A673 (cell line): ENCODE measurements at regions of chr15 and their contacts with region 1.

Region 1: DNA sequence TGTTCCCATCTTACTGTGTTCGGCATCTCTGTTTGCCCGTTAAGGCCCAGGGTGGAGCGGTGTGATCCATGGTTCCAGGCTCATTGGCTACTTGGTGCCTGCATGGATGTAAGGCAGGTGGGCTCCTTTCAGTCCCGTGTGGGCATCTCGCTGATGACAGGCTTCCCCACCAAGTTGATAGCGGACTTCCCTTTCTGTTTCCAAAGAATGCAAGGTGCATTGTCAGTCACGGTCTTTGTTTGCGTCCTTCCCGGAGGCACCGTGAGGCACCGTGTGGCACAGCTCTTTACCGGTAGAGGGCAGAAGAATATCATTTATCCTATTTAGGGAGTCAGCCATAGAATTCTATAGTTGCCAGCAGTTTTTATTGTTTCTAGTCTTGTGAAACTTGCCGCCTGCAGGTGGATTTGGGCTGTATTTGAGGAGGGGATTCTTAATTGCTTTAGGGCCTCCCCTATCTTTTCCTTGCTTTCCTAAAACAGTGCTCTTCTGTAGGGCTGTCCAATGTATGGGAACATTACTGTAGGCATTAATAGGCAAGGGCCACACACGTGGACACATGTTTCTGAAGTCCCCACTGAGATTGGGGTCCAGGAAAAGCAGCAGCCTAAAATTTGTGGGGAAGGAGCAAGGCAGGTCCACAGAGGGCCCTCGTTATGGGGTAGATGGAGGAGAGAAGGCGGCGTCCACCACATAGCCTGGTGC is 244.1 kb downstream of the SLCO3A1 start:
- DNase-seq: peak; percentile 75
- H3K4me3 ChIP-seq: no peak overlapping the region
- H3K27ac ChIP-seq: no peak overlapping the region
- H3K4me1 ChIP-seq: no peaks in the 10 kb centered on the region
- H3K27me3 ChIP-seq: no peaks in the 10 kb centered on the region
- CTCF ChIP-seq: peak; percentile 88

Region 2: GRCh38 chr15:91921188-91921842 is 176.3 kb before region 1 on chr15:
- CTCF ChIA-PET with region 1: no interaction called
- POLR2A ChIA-PET with region 1: no interaction called
- intact Hi-C with region 1: no loop called
- DNase-seq: peak; percentile 37
- H3K4me3 ChIP-seq: no peak overlapping the region
- H3K27ac ChIP-seq: no peak overlapping the region
- H3K4me1 ChIP-seq: peaks cover 2% of the 10 kb centered on the region
- H3K27me3 ChIP-seq: no peaks in the 10 kb centered on the region
- CTCF ChIP-seq: no peak

Region 3: GRCh38 chr15:92043263-92043662 is 54.4 kb before region 1 on chr15:
- CTCF ChIA-PET with region 1: no interaction called
- POLR2A ChIA-PET with region 1: no interaction called
- intact Hi-C with region 1: no loop called
- DNase-seq: no peak
- H3K4me3 ChIP-seq: no peak overlapping the region
- H3K27ac ChIP-seq: no peak overlapping the region
- H3K4me1 ChIP-seq: no peaks in the 10 kb centered on the region
- H3K27me3 ChIP-seq: no peaks in the 10 kb centered on the region
- CTCF ChIP-seq: no peak

Region 4: DNA sequence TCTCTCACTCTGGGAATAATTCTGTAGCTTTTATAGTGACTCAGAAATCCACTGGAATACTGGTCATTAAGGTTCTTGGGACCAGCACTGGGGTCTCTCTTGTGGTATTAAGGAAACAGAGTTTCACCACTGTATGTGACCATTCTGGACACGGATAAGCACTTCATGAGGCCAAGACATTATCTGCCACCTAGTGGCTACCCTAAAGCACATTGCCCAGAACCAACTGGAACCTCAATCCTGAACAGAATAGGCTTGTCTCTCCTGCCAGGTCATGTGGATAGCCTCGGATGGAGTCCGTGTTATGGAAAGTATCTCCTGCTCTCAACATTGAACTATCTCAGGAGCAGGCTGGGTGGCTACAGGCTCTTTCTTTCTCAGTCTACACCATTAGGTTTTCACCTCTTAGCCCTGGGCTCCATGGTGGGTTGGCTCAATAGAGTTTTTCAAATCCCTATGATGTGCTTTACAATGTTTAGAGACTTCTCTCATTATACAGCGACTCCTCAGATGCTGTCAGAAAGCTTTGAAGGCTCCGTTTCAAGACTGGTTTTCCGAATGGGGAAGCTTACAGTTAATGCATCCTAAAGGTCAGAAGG is 128.5 kb after region 1 on chr15:
- CTCF ChIA-PET with region 1: interaction called, 3 read pairs
- POLR2A ChIA-PET with region 1: no interaction called
- intact Hi-C with region 1: loop called (anchors 1 kb)
- DNase-seq: peak; percentile 11
- H3K4me3 ChIP-seq: no peak overlapping the region
- H3K27ac ChIP-seq: no peak overlapping the region
- H3K4me1 ChIP-seq: no peaks in the 10 kb centered on the region
- H3K27me3 ChIP-seq: peaks cover 4% of the 10 kb centered on the region
- CTCF ChIP-seq: peak; percentile 52

Region 5: GRCh38 chr15:92383519-92384326 is 286.1 kb after region 1 on chr15:
- CTCF ChIA-PET with region 1: no interaction called
- POLR2A ChIA-PET with region 1: no interaction called
- intact Hi-C with region 1: loop called (anchors 1 kb)
- DNase-seq: peak; percentile 40
- H3K4me3 ChIP-seq: no peak overlapping the region
- H3K27ac ChIP-seq: no peak overlapping the region
- H3K4me1 ChIP-seq: no peaks in the 10 kb centered on the region
- H3K27me3 ChIP-seq: peaks cover 33% of the 10 kb centered on the region
- CTCF ChIP-seq: peak; percentile 79

Region 6: DNA sequence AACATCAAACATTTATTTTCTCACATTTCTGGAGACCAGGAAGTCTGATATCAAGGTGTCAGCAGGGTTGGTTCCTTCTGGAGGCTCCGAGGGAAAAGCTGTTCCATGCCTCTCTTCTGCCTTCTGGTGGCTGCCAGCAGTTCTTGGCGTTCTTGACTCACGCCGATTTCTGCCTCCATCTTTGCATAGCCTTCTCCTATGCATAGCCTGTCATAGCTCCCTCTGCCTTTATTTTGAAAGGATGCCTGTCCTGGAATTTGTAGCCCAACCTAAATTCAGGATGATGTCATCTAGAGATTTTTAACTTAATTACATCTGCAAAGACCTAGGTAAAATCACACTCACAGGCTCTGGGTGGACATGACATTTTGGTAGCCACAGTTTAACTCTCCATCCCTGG is 921.0 kb after region 1 on chr15:
- CTCF ChIA-PET with region 1: no interaction called
- POLR2A ChIA-PET with region 1: no interaction called
- intact Hi-C with region 1: no loop called
- DNase-seq: peak; percentile 33
- H3K4me3 ChIP-seq: no peak overlapping the region
- H3K27ac ChIP-seq: no peak overlapping the region
- H3K4me1 ChIP-seq: no peaks in the 10 kb centered on the region
- H3K27me3 ChIP-seq: no peaks in the 10 kb centered on the region
- CTCF ChIP-seq: peak; percentile 38